ENCODE measurements at regions of chr14 and their contacts with region 1.

Region 1: DNA sequence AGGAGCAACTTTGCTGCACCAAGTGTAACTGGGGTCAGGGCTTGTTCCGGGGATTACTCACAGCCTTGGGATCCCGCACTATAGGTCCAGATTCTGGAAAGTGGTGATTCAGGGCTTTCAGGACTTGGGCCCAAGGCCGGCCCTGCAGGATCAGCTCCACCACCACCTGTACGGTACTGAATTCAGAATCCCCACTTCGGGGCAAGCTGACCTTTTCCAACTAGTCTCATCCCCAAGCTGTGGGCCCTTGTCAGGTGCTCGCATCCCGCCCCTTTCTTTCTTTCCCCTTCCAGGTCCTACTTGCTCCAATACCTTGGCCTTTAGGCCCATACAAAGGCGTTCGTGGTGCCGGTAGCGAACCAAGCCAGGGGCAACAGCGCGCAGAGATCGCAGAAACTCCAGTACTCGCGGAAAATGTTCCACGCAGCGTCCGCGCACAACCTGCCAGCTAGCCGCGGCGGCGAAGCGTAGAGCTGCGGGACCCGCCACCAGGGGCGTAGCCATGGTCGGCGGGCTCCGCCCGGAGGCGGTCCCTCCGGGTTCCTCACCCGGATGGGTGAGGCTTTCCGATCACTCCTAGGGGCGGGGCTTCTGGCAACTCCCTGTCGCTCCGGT is 487 bp downstream of the TINF2 start:
- DNase-seq: no peak
- ATAC-seq: peak; percentile 83
- H3K4me3 ChIP-seq: peak overlapping the region; percentile 71 to 91 (median 88)
- H3K4me3 Mint-ChIP-seq: peak overlapping the region; percentile 98
- H3K27ac ChIP-seq: peak overlapping the region; percentile 98 to 100
- H3K27ac Mint-ChIP-seq: peak overlapping the region; percentile 100
- H3K4me1 ChIP-seq: peaks cover 47 to 49% of the 10 kb centered on the region in 2 donors
- H3K4me1 Mint-ChIP-seq: peaks cover 64% of the 10 kb centered on the region
- H3K27me3 ChIP-seq: no peaks in the 10 kb centered on the region
- H3K27me3 Mint-ChIP-seq: no peaks in the 10 kb centered on the region
- CTCF ChIP-seq: peak; percentile 23

Region 2: GRCh38 chr14:23929822-23930294 is 312.1 kb before region 1 on chr14:
- CTCF ChIA-PET with region 1: no interaction called
- POLR2A ChIA-PET with region 1: no interaction called
- intact Hi-C with region 1: no loop called
- DNase-seq: peak; percentile 77
- ATAC-seq: peak; percentile 84
- H3K4me3 ChIP-seq: no peak overlapping the region
- H3K4me3 Mint-ChIP-seq: no peak overlapping the region
- H3K27ac ChIP-seq: no peak overlapping the region
- H3K27ac Mint-ChIP-seq: no peak overlapping the region
- H3K4me1 ChIP-seq: no peaks in the 10 kb centered on the region
- H3K4me1 Mint-ChIP-seq: no peaks in the 10 kb centered on the region
- H3K27me3 ChIP-seq: no peaks in the 10 kb centered on the region
- H3K27me3 Mint-ChIP-seq: peaks cover 5% of the 10 kb centered on the region
- CTCF ChIP-seq: peak; percentile 96

Region 3: GRCh38 chr14:24013654-24014514 is 228.1 kb before region 1 on chr14:
- CTCF ChIA-PET with region 1: no interaction called
- POLR2A ChIA-PET with region 1: no interaction called
- intact Hi-C with region 1: loop called (anchors 10 kb)
- DNase-seq: peak; percentile 83
- ATAC-seq: peak; percentile 92
- H3K4me3 ChIP-seq: no peak overlapping the region
- H3K4me3 Mint-ChIP-seq: no peak overlapping the region
- H3K27ac ChIP-seq: no peak overlapping the region
- H3K27ac Mint-ChIP-seq: no peak overlapping the region
- H3K4me1 ChIP-seq: peaks cover 0 to 3% of the 10 kb centered on the region in 2 donors
- H3K4me1 Mint-ChIP-seq: peaks cover 30% of the 10 kb centered on the region
- H3K27me3 ChIP-seq: no peaks in the 10 kb centered on the region
- H3K27me3 Mint-ChIP-seq: no peaks in the 10 kb centered on the region
- CTCF ChIP-seq: peak; percentile 97

Region 4: DNA sequence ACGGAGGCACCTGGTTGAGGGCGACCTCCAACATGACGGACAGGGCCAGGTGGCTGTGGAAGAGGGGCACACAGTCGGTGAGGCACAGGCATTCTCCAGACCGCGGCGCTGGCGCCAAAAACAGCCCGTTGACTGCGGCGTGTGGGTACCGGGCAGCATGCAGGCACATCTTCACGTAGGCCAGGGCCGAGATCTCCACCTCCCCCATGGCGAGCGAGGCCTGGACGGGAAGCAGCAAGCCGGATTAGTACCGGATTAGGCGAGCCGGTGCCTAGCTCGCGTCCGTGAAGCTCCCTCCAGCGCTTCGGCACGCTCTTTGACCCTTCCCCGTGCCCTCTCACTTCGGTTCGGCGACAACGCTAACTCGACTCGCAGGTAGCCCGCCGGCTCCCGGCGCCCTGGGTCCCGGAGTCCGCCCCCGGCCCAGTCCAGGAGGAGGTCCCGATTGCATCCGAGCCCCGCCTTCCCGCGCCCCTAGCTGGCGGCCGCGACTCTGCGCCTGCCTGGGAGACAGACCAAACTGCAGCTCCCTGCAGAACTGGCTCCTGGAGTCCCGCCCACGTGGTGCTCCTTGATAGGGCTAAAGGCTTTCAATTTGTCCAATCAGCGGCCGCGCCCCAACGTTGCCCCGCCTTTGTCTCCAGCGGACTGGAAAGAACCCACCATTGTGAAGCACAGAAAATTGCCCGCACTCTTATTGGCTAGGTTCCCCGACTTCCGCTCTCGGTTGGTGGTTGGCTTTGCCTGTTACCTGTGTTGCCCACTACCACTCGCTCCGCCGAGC is 100.6 kb before region 1 on chr14 and contains the start of gene EMC9:
- CTCF ChIA-PET with region 1: interaction called, 3 read pairs
- POLR2A ChIA-PET with region 1: interaction called, 10 read pairs
- intact Hi-C with region 1: loop called (anchors 1 kb)
- DNase-seq: peak; percentile 99
- ATAC-seq: peak; percentile 89
- H3K4me3 ChIP-seq: peak within 1 kb of the TSS; percentile 67 to 93 (median 82)
- H3K4me3 Mint-ChIP-seq: peak within 1 kb of the TSS; percentile 96
- H3K27ac ChIP-seq: peak within 1 kb of the TSS; percentile 63 to 80
- H3K27ac Mint-ChIP-seq: peak within 1 kb of the TSS; percentile 95
- H3K4me1 ChIP-seq: peaks cover 33 to 50% of the 10 kb centered on the region in 2 donors
- H3K4me1 Mint-ChIP-seq: peaks cover 64% of the 10 kb centered on the region
- H3K27me3 ChIP-seq: no peaks in the 10 kb centered on the region
- H3K27me3 Mint-ChIP-seq: no peaks in the 10 kb centered on the region
- CTCF ChIP-seq: peak; percentile 37
- total RNA-seq, gene EMC9: 24.7 and 26.4 TPM in 2 replicates

Region 5: DNA sequence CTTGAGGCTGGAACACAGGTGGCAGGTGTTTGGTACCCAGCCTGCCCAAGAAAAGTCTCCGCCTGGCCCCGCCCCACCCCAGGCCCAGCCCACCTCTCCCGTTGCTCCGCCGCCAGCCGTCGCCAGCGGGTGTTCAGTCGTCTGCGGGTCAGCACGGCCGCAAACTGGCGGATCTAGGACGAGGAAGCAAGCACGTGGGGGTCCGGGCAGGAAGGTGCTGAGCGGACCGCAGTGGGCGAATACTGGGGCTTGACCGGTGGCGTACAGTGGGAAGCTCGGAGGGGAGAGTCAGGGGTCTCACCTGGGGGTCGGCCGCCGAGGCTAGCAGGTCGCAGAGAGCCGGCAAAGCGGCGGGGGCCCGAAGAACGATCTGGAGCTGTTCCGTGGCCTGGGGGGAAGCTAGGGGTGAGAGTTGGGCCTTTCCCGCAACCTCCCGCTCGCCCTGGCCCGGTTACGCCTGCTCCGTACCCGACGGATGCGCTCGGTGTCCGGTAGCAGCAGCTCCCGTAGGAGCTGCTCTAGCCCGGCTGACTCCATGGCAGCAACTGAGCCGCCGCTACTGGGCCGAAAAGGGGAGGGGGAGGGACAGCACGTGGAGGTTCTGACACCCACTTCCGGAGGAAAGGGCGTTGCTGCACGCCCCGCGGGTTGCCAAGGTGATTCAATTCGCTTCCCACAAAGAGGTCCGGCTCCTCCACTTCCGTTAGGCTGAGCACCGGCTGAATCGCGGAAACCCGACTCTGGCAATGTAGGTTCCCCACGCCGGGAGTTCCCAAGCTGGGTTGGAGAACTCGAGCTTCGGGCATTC is 53.5 kb before region 1 on chr14 and contains the start of gene IPO4:
- CTCF ChIA-PET with region 1: interaction called, 11 read pairs
- POLR2A ChIA-PET with region 1: interaction called, 6 read pairs
- intact Hi-C with region 1: loop called (anchors 1 kb)
- DNase-seq: peak; percentile 96
- ATAC-seq: peak; percentile 93
- H3K4me3 ChIP-seq: peak within 1 kb of the TSS; percentile 32 to 79 (median 70)
- H3K4me3 Mint-ChIP-seq: peak within 1 kb of the TSS; percentile 93
- H3K27ac ChIP-seq: peak within 1 kb of the TSS; percentile 63 to 86
- H3K27ac Mint-ChIP-seq: peak within 1 kb of the TSS; percentile 87
- H3K4me1 ChIP-seq: peaks cover 14 to 17% of the 10 kb centered on the region in 2 donors
- H3K4me1 Mint-ChIP-seq: peaks cover 35% of the 10 kb centered on the region
- H3K27me3 ChIP-seq: no peaks in the 10 kb centered on the region
- H3K27me3 Mint-ChIP-seq: no peaks in the 10 kb centered on the region
- CTCF ChIP-seq: no peak
- total RNA-seq, gene IPO4: 29.8 and 35.0 TPM in 2 replicates

Region 6: GRCh38 chr14:24271134-24271833 is 29.3 kb after region 1 on chr14 and contains the start of gene RABGGTA:
- CTCF ChIA-PET with region 1: interaction called, 37 read pairs
- POLR2A ChIA-PET with region 1: interaction called, 51 read pairs
- intact Hi-C with region 1: loop called (anchors 1 kb)
- DNase-seq: peak; percentile 98
- ATAC-seq: peak; percentile 87
- H3K4me3 ChIP-seq: peak within 1 kb of the TSS; percentile 45 to 96 (median 93)
- H3K4me3 Mint-ChIP-seq: peak within 1 kb of the TSS; percentile 94
- H3K27ac ChIP-seq: peak within 1 kb of the TSS; percentile 93 to 97
- H3K27ac Mint-ChIP-seq: peak within 1 kb of the TSS; percentile 94
- H3K4me1 ChIP-seq: peaks cover 32 to 39% of the 10 kb centered on the region in 2 donors
- H3K4me1 Mint-ChIP-seq: peaks cover 48% of the 10 kb centered on the region
- H3K27me3 ChIP-seq: no peaks in the 10 kb centered on the region
- H3K27me3 Mint-ChIP-seq: no peaks in the 10 kb centered on the region
- CTCF ChIP-seq: peak; percentile 75
- total RNA-seq, gene RABGGTA: 57.9 and 70.1 TPM in 2 replicates

Region 7: GRCh38 chr14:24299255-24300195 is 57.6 kb after region 1 on chr14 and contains the starts of genes DHRS1 and NOP9:
- CTCF ChIA-PET with region 1: interaction called, 254 read pairs
- POLR2A ChIA-PET with region 1: interaction called, 47 read pairs
- intact Hi-C with region 1: loop called (anchors 1 kb)
- DNase-seq: peak; percentile 95
- ATAC-seq: peak; percentile 86
- H3K4me3 ChIP-seq: peak within 1 kb of the TSS; percentile 58 to 93 (median 77)
- H3K4me3 Mint-ChIP-seq: peak within 1 kb of the TSS; percentile 96
- H3K27ac ChIP-seq: peak within 1 kb of the TSS; percentile 79 to 83
- H3K27ac Mint-ChIP-seq: peak within 1 kb of the TSS; percentile 98
- H3K4me1 ChIP-seq: peaks cover 30 to 41% of the 10 kb centered on the region in 2 donors
- H3K4me1 Mint-ChIP-seq: peaks cover 48% of the 10 kb centered on the region
- H3K27me3 ChIP-seq: no peaks in the 10 kb centered on the region
- H3K27me3 Mint-ChIP-seq: no peaks in the 10 kb centered on the region
- CTCF ChIP-seq: no peak
- total RNA-seq, gene DHRS1: 42.7 and 43.7 TPM in 2 replicates
- total RNA-seq, gene NOP9: 22.6 and 24.5 TPM in 2 replicates

Region 8: GRCh38 chr14:24366721-24367513 is 125.0 kb after region 1 on chr14:
- CTCF ChIA-PET with region 1: interaction called, 5 read pairs
- POLR2A ChIA-PET with region 1: interaction called, 6 read pairs
- intact Hi-C with region 1: loop called (anchors 1 kb)
- DNase-seq: peak; percentile 94
- ATAC-seq: peak; percentile 85
- H3K4me3 ChIP-seq: peak overlapping the region in 4 of 5 experiments; percentile 52 to 64 (median 60)
- H3K4me3 Mint-ChIP-seq: peak overlapping the region; percentile 92
- H3K27ac ChIP-seq: peak overlapping the region; percentile 59 to 70
- H3K27ac Mint-ChIP-seq: peak overlapping the region; percentile 92
- H3K4me1 ChIP-seq: peaks cover 30 to 39% of the 10 kb centered on the region in 2 donors
- H3K4me1 Mint-ChIP-seq: peaks cover 32% of the 10 kb centered on the region
- H3K27me3 ChIP-seq: peaks cover 0 to 32% (median 6%) of the 10 kb centered on the region in 4 experiments
- H3K27me3 Mint-ChIP-seq: peaks cover 10% of the 10 kb centered on the region
- CTCF ChIP-seq: no peak